ENCODE measurements at regions of chrX and their contacts with region 1.

Region 1: GRCh38 chrX:66728818-66729271 is 90.0 kb upstream of the EDA2R start:
- DNase-seq: peak; percentile 64
- H3K4me3 Mint-ChIP-seq: peak overlapping the region; percentile 87
- H3K27ac Mint-ChIP-seq: peak overlapping the region; percentile 92
- H3K4me1 Mint-ChIP-seq: peaks cover 2% of the 10 kb centered on the region
- H3K27me3 Mint-ChIP-seq: no peaks in the 10 kb centered on the region

Region 2: DNA sequence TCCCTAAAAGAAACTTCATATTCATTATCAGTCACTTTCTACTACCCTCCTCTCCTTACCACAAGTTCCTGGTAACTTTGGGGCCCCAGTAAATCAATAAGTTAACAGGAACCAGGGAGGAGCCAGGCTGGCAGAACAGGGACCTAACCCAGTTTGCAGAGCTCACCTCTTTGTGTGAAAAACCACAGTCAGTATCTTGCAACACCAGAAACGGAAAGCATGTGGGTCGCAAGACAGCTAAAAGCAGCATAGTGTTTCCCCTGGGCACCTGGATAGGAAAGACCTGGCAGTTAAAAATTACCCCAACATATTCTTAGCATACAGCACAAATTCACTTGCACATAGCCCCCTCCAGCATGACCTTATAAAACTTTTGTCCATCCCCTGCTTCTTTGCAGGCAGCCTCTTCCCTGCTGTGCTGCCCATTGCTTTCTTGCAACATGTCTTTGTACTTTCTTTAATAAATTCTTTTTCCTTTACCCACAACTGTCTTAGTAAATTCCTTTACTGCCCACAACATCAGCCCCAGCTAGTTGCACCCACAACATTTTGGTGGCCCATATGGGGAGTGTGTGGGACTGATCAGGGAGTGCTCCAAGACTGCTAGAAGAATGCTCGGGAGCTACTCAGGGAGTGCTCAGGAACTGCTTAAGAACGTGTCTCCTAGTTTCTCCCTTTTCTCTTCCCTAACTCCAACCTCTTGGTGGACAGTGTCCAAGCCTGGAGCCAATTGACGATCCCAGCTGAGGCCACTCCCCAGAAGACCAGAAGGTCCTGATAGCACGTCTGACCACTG is 978.0 kb before region 1 on chrX:
- CTCF ChIA-PET with region 1: no interaction called
- intact Hi-C with region 1: loop called (anchors 5 kb)
- DNase-seq: peak; percentile 60
- H3K4me3 Mint-ChIP-seq: peak overlapping the region; percentile 4
- H3K27ac Mint-ChIP-seq: peak overlapping the region; percentile 30
- H3K4me1 Mint-ChIP-seq: peaks cover 56% of the 10 kb centered on the region
- H3K27me3 Mint-ChIP-seq: no peaks in the 10 kb centered on the region

Region 3: DNA sequence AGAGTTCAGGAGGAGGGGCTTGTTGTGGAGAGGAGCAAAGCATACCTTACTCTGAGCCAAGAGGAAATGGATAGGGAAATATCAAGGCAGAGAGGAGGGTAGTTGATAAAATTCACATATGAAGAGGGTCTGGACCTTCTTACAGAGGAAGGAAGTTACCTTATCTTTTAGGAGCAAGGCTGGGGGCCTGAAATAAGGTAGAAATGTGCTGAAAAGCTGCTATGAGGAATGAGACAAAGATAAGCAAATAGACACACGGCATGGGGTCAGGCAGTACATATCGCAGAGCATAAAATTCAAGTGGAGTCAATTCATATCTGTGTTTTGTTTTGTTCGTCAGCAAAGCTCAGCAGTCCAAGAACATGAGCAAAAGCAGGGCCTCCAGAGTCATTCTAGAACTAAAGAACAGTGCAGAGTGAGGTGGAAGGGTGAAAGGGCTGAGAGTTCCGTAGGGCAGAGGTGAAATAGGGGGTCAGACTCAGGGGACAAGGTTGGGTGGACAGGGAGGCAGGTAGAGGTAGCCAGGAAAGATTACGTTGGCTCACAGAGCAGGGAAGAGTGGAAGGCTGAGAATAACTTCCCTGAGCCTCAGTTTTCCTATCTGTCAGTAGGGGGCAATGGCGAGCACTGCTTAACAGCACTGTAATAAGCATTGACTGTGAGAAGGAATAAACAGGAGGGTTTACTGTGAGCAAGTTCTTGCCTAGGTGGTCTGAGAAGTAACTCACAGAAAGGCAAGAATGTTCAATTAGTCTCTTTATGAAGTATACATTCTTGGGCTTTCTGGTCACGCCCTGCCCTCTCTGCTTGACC is 698.1 kb before region 1 on chrX:
- CTCF ChIA-PET with region 1: no interaction called
- intact Hi-C with region 1: loop called (anchors 1 kb)
- DNase-seq: peak; percentile 37
- H3K4me3 Mint-ChIP-seq: no peak overlapping the region
- H3K27ac Mint-ChIP-seq: no peak overlapping the region
- H3K4me1 Mint-ChIP-seq: peaks cover 5% of the 10 kb centered on the region
- H3K27me3 Mint-ChIP-seq: no peaks in the 10 kb centered on the region

Region 4: DNA sequence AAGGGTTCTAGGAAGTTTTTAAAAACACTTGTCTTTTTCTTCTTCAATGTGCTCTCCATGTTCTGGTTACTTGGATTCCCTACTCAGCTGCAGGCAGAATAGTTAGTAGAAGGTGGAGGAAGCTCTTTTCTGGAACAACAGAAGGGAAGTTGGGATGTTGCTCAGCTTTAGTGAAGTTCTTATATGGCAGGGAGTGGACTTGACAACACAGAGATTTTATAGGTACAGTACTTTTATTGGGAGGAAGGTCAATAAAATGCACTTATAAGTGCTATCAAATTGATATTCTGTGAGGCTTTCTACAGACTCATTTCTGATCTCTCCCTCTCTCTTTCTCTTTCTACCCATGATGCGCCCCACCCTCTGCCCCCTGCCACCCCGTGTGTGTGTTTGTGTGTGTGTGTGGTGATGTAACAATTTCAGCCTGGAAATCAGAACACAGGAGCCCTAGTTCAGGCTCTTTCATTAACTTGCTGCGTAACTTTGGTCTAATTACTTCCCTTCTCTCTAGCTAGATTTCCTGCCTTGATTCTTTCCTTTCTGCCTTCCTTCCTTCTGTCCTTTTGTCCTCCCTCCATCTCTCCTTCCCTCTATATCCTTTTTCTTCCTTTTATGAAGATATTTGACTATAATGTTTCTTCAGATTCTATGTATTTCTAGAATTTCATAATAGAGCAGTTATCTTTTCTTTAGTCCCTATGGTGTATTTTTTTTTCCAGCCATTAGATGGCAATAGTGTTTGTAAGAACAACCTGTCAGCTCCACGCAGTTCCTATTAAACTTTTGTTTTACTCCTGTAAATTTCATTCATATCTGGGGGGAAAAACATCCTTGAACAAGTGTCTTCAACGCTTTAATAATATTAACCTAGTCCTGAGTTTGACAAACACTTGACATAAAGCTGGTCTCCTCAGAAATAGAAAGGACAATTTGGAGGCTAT is 527.7 kb before region 1 on chrX:
- CTCF ChIA-PET with region 1: interaction called, 16 read pairs
- intact Hi-C with region 1: loop called (anchors 1 kb)
- DNase-seq: no peak
- H3K4me3 Mint-ChIP-seq: no peak overlapping the region
- H3K27ac Mint-ChIP-seq: no peak overlapping the region
- H3K4me1 Mint-ChIP-seq: peaks cover 28% of the 10 kb centered on the region
- H3K27me3 Mint-ChIP-seq: no peaks in the 10 kb centered on the region

Region 5: DNA sequence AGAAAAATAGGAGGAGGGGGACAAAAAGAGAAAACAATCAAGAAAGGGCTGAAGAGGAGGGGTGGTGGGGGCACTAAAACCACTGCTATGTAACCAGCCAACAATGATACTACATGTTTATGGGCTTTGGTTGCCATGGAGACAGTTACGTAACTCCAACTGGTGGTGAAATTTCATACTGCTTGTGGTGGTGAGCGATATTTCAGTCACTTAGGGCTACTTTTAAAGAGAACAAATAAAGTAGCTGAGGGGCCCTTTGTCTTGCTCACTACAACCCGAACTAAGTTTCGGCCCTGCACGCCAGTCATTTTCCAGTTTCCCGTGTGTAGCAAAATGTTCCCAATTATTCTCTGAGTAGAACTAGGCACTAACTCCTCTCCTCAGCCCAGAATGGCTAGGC is 185.2 kb after region 1 on chrX:
- CTCF ChIA-PET with region 1: no interaction called
- intact Hi-C with region 1: no loop called
- DNase-seq: no peak
- H3K4me3 Mint-ChIP-seq: no peak overlapping the region
- H3K27ac Mint-ChIP-seq: no peak overlapping the region
- H3K4me1 Mint-ChIP-seq: no peaks in the 10 kb centered on the region
- H3K27me3 Mint-ChIP-seq: no peaks in the 10 kb centered on the region